Left cardiac atrium (tissue), 4 donors: ENCODE measurements at regions of chr5 and their contacts with region 1.

Region 1: DNA sequence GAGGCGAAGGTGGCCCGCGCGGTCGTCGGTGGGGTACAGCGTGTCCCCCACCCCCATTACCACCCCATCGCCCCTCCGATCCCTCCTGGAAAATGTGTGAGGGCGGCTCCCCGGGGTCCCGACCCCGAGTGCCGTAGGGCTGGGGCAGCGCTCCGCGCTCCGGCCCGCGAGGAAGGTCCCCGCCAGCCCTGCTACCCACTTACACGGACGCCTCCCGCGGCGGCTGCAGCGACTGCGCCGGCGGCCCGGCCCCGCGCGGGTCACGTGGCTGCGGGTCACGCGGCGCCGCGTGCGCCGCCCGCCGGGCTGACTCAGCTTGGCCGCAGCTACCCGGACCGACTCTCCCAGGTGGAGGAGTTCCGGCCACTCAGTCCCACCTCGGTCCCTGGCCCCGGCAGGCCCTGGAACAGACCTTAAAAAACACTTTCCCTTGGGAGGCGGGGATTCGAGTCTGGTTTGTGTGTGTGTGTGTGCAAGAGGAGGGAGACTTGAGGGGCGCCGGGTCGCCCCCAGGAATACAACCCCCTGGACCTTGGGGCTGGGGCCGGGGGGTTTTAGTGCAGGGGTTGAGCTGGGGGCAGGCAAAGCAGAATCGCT is at the start of gene GNPDA1:
- DNase-seq: peak; percentile 87
- ATAC-seq: peak; percentile 92 to 98
- total RNA-seq, gene GNPDA1: 17.3 to 25.7 TPM

Region 2: DNA sequence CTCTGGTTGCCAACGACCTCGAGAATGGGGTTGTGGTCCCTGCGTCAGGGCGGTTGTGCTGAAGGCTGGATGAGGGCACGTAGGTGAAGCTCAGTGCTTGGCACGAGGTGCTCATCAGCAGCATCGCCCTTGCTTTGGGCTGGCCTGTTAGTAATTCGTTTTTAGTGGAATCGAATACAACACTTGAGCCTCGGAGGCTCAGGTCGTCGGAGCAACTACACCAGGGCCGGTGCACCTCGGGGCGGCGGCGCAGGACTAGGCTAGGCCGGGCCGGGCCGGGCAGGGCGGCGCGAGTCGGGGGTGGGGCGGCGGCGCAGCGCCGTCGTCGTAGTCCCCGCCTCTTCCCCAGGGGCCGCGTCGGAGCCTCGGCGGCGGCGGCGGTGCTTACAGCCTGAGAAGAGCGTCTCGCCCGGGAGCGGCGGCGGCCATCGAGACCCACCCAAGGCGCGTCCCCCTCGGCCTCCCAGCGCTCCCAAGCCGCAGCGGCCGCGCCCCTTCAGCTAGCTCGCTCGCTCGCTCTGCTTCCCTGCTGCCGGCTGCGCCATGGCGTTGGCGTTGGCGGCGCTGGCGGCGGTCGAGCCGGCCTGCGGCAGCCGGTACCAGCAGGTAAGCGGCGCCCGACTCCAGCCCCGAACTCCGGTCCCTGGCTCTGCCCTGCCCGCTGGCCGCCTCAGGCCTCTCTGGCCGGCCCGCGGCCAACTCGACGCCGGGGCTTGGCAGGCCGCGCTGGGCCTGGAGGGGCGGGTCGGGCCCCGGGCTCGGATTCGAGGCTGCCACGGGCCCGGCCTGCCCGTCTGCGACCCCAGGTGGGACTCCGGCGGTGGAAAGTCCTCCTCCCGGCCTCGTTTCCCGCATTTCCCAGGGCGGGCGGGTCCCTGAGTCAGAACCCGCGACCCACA is 95.8 kb after region 1 on chr5 and contains the start of gene NDFIP1:
- intact Hi-C with region 1: loop called in 1 of 2 experiments (anchors 5 kb)
- DNase-seq: peak; percentile 89
- ATAC-seq: peak; percentile 99
- total RNA-seq, gene NDFIP1: 54.9 to 63.6 TPM

Region 3: GRCh38 chr5:142134331-142135010 is 121.6 kb after region 1 on chr5:
- intact Hi-C with region 1: loop called in 1 of 2 experiments (anchors 5 kb)
- DNase-seq: no peak
- ATAC-seq: no peak

Region 4: DNA sequence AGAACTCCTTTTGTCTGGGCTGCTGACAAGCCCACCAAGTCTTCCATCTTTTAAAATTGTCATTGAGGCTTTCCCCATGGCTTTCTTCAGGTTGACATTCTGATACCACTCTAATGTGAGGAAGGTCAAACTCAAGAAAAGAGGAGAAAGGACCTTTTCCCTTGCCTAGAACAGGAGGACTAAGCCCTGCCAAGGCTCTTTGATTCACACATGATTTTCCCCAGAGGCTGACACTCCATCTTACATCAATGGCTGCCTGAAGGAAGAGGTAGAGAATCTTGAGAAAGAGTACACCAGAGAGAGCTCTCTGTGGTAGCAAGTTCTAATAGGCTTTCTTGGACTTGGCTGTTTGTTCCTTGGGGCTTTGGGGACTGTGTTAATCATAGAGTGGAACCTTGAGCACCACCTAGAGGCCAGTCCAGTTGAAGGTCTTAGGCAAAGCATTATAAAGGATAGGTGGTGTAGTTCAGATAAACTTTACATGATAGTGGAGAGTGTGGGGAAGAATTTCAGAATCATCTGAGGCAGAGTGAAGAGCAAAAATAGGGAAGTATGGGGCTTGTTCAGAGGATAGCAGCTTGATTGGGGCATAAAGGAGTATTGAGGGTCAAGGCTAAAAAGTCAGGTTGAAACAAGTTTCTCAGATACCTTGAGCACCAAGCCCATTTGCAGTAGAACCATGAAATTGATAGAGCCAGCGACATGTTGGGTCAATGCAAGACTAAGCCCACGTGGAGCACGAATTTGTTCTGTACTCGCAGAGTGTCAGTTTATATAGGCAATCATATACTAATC is 132.4 kb after region 1 on chr5:
- intact Hi-C with region 1: loop called in 1 of 2 experiments (anchors 5 kb)
- DNase-seq: peak; percentile 68
- ATAC-seq: peak; percentile 87 to 90